Panc1 (cell line): ENCODE measurements at regions of chr14 and their contacts with region 1.

Region 1: GRCh38 chr14:65164068-65164824 is 61.9 kb upstream of the MAX start:
- DNase-seq: no peak
- ATAC-seq: peak; percentile 82; the same call in 1 of the 2 replicates
- H3K4me3 ChIP-seq: no peak overlapping the region
- H3K27ac ChIP-seq: no peak overlapping the region
- H3K4me1 ChIP-seq: no peaks in the 10 kb centered on the region
- H3K27me3 ChIP-seq: no peaks in the 10 kb centered on the region
- CTCF ChIP-seq: peak; percentile 62

Region 2: DNA sequence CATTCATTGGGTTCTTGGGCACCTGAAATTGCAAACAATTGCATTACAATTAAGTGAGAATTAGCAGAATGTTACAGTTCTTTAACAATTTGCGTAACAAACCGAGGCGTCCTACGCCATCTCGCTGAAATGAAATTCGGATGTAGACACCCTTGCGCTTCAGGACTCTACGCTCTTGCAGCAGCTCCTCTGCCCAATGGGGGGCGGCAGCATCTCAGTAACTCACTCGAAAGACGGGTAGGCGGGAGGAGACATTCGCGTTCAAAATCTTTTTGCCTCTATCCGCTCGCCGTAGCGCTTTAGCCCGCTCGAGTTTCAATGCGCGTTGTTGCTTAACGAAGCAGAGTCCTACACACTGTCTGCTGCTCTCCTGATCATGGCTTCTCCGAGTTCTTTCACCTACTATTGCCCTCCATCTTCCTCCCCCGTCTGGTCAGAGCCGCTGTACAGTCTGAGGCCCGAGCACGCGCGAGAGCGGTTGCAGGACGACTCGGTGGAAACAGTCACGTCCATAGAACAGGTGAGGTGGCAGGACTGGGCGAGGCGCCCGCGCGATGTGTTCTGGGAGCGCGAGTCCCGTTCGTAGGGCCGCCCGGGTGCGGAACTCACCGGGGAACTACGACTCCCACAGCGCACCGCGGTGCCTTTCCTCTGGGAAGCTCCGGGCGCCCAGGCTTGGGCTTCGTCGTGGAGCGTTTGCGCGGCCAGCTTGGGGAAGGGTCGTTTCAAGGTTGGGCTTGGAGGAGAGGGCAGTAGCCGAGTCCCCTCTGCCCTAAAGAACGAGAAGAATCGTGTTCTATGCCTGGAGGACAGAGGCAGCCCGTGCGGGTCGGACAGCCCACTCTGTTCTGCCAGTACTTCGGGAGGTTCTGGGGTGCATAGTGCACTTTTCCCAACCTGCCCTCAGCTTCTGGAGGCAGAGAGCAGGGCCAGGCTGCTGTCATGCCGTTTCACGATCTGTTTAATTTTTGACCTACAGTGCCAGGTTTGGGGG is 177.4 kb before region 1 on chr14 and contains the start of gene FNTB:
- CTCF ChIA-PET with region 1: interaction called, 10 read pairs
- POLR2A ChIA-PET with region 1: no interaction called
- in situ Hi-C with region 1: no loop called
- intact Hi-C with region 1: no loop called
- DNase-seq: peak; percentile 92
- ATAC-seq: peak; percentile 100
- H3K4me3 ChIP-seq: peak within 1 kb of the TSS; percentile 84 to 88
- H3K27ac ChIP-seq: peak within 1 kb of the TSS; percentile 89
- H3K4me1 ChIP-seq: peaks cover 7% of the 10 kb centered on the region
- H3K27me3 ChIP-seq: peaks cover 2% of the 10 kb centered on the region; the same call in 1 of the 2 replicates
- CTCF ChIP-seq: peak; percentile 86
- total RNA-seq, gene FNTB: 13.3 TPM

Region 3: GRCh38 chr14:65117769-65118701 is 46.2 kb before region 1 on chr14:
- CTCF ChIA-PET with region 1: no interaction called
- POLR2A ChIA-PET with region 1: no interaction called
- in situ Hi-C with region 1: no loop called
- intact Hi-C with region 1: no loop called
- DNase-seq: no peak
- ATAC-seq: no peak
- H3K4me3 ChIP-seq: no peak overlapping the region
- H3K27ac ChIP-seq: no peak overlapping the region
- H3K4me1 ChIP-seq: no peaks in the 10 kb centered on the region
- H3K27me3 ChIP-seq: no peaks in the 10 kb centered on the region
- CTCF ChIP-seq: no peak

Region 4: GRCh38 chr14:65287264-65288131 is 123.3 kb after region 1 on chr14:
- CTCF ChIA-PET with region 1: no interaction called
- POLR2A ChIA-PET with region 1: no interaction called
- in situ Hi-C with region 1: no loop called
- intact Hi-C with region 1: no loop called
- DNase-seq: no peak
- ATAC-seq: no peak
- H3K4me3 ChIP-seq: no peak overlapping the region
- H3K27ac ChIP-seq: no peak overlapping the region
- H3K4me1 ChIP-seq: peaks cover 4% of the 10 kb centered on the region; the same call in 1 of the 2 replicates
- H3K27me3 ChIP-seq: no peaks in the 10 kb centered on the region
- CTCF ChIP-seq: no peak

Region 5: DNA sequence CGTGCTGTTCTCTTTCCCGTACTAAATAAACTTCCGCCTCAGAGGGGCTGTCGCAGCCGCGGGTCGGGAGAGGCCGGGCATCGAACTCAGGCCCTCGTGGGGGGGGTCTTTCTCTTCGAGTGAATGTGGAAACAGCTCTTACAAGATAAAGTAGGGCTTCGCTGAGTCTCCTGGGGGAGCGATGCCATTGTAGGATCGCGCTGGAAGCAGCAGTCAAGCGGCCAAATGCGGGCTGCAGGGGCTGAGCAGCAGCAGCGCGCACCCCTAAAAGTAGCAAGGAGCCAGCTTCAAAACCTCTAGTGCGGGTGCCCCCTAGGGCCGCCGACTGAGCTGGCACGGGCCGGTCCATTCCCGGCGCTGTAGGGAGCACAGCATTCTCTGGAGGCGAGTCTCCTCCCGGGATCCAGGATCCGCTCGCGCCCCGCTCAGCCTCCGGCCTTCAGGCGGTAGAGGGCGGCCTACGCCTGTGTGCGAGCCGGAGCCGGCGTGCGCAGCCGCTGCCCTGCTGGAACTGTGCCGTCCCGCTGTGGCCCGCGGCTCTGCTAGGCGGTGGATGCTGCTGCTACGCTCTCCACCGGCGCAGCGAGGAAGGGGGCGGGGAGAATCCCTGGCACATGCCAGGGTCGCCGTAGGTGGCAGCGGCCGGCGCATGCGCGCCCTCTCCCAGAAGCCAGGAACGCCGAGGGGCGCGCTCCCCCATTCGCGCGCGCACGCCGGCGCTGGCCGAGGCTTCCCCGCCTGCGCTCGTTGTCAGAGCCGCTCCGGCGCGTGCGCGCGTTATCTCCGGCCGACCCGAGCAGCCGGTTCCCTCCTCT is 248.0 kb after region 1 on chr14 and contains the start of gene FUT8:
- CTCF ChIA-PET with region 1: no interaction called
- POLR2A ChIA-PET with region 1: no interaction called
- in situ Hi-C with region 1: no loop called
- intact Hi-C with region 1: loop called (anchors 10 kb)
- DNase-seq: peak; percentile 79
- ATAC-seq: peak; percentile 93
- H3K4me3 ChIP-seq: peak within 1 kb of the TSS; percentile 71 to 92
- H3K27ac ChIP-seq: peak within 1 kb of the TSS; percentile 89
- H3K4me1 ChIP-seq: peaks cover 16% of the 10 kb centered on the region
- H3K27me3 ChIP-seq: no peaks in the 10 kb centered on the region
- CTCF ChIP-seq: peak; percentile 75
- total RNA-seq, gene FUT8: 31.4 TPM

Region 6: GRCh38 chr14:65824285-65824977 is 660.2 kb after region 1 on chr14:
- CTCF ChIA-PET with region 1: interaction called, 6 read pairs
- POLR2A ChIA-PET with region 1: no interaction called
- in situ Hi-C with region 1: no loop called
- intact Hi-C with region 1: loop called (anchors 10 kb)
- DNase-seq: peak; percentile 55
- ATAC-seq: peak; percentile 70; the same call in 1 of the 2 replicates
- H3K4me3 ChIP-seq: no peak overlapping the region
- H3K27ac ChIP-seq: no peak overlapping the region
- H3K4me1 ChIP-seq: no peaks in the 10 kb centered on the region
- H3K27me3 ChIP-seq: peaks cover 7% of the 10 kb centered on the region; the same call in 1 of the 2 replicates
- CTCF ChIP-seq: peak; percentile 85

Region 7: GRCh38 chr14:65958664-65959562 is 794.7 kb after region 1 on chr14:
- CTCF ChIA-PET with region 1: interaction called, 3 read pairs
- POLR2A ChIA-PET with region 1: no interaction called
- in situ Hi-C with region 1: no loop called
- intact Hi-C with region 1: loop called (anchors 5 kb)
- DNase-seq: no peak
- ATAC-seq: no peak
- H3K4me3 ChIP-seq: no peak overlapping the region
- H3K27ac ChIP-seq: no peak overlapping the region
- H3K4me1 ChIP-seq: no peaks in the 10 kb centered on the region
- H3K27me3 ChIP-seq: no peaks in the 10 kb centered on the region; the same call in 1 of the 2 replicates
- CTCF ChIP-seq: peak; percentile 45; the same call in 1 of the 2 replicates